ENCODE measurements at regions of chr4 and their contacts with region 1.

Region 1: DNA sequence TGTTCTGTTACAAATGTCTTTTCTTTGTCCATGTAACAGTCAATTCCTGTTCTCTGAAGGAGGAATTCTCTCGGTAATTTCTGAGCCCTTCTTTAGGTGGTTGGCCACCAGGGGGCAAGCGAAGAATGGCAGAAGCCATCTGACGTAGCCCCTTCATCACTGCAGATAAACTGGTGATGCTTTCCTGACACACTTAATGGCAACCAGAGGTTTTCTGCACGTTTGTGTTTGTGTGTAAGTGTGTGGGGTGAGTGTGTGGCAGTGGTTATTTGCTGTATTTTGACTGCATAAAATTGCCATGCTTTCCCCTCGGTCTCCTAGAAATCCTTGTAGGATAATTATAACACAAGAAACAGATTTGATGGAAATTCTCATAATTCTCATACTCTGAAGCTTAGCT is 64.8 kb upstream of the STOX2 start:
- DNase-seq: peak; percentile 39
- ATAC-seq: peak; percentile 81
- H3K4me3 ChIP-seq: no peak overlapping the region
- H3K27ac ChIP-seq: no peak overlapping the region
- H3K4me1 ChIP-seq: no peaks in the 10 kb centered on the region; the same call in 1 of the 2 replicates
- H3K27me3 ChIP-seq: no peaks in the 10 kb centered on the region
- CTCF ChIP-seq: peak; percentile 81

Region 2: DNA sequence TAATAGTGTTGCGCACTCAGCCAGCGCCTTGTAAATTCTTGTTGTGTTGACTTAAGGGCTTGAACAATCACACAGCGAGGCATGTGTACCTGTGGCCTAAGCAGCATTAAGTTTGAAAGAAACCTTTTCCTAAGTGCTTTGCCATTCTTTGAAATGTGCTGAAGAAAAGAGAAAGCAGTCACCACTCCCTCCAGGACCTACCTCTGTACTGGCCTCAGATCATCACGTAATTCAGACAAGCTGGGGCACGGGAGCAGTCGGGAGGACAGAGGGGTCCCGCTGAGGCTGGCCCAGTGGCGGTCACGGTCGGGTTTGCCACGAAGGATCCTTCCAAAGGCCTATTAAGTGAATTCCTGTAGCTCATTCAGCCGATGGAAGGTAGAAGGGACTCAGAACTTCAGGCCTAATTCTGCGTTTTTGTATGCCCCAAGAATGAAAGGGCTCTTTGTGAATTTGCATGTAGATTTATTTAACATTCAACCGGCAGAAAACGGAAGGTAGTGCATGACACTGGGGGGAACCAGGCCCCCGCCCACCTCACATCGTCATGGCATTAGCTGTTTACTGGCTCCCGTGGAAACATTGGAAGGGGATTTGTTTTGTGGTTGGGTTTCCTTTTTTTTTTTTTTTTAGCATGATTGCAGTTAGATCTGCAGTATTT is 74.9 kb before region 1 on chr4:
- CTCF ChIA-PET with region 1: no interaction called
- POLR2A ChIA-PET with region 1: no interaction called
- in situ Hi-C with region 1: no loop called
- intact Hi-C with region 1: no loop called
- DNase-seq: no peak
- ATAC-seq: no peak
- H3K4me3 ChIP-seq: no peak overlapping the region
- H3K27ac ChIP-seq: no peak overlapping the region
- H3K4me1 ChIP-seq: peaks cover 4% of the 10 kb centered on the region
- H3K27me3 ChIP-seq: no peaks in the 10 kb centered on the region
- CTCF ChIP-seq: no peak

Region 3: DNA sequence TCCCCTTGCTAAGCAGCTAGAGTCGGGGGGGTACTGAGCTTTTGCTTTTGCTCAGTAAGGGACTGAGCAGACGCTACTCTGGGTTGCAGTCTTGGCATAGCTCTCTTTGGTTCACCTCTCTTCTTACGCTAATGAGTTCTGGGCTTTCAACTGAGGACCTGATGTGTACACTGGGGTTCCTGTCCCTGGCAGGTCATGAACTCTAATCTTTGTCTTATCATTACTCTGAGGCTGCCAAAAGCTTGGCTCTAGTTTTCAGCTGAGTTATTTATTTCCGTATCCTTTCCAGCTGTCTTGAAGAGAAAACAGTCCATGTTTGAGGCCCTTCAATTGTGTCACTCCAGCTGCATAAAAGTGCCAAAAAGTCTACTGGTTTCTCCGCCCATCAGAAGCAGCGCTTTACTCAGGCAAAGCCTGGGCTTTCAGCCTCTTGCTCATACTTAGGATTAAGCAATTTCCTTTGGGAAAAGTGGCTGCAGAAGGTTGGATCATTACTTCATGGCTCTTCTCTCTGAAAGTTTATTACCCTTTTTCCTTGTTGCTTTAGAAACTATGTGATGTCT is 56.2 kb before region 1 on chr4:
- CTCF ChIA-PET with region 1: no interaction called
- POLR2A ChIA-PET with region 1: no interaction called
- in situ Hi-C with region 1: no loop called
- intact Hi-C with region 1: no loop called
- DNase-seq: no peak
- ATAC-seq: no peak
- H3K4me3 ChIP-seq: no peak overlapping the region
- H3K27ac ChIP-seq: no peak overlapping the region
- H3K4me1 ChIP-seq: no peaks in the 10 kb centered on the region
- H3K27me3 ChIP-seq: no peaks in the 10 kb centered on the region
- CTCF ChIP-seq: no peak

Region 4: GRCh38 chr4:183823434-183823833 is 16.9 kb before region 1 on chr4:
- CTCF ChIA-PET with region 1: no interaction called
- POLR2A ChIA-PET with region 1: no interaction called
- in situ Hi-C with region 1: no loop called
- intact Hi-C with region 1: no loop called
- DNase-seq: no peak
- ATAC-seq: peak; percentile 85
- H3K4me3 ChIP-seq: no peak overlapping the region
- H3K27ac ChIP-seq: 0 out of 2 replicates have a peak overlapping the region, but pooled peaks have one; percentile 12
- H3K4me1 ChIP-seq: no peaks in the 10 kb centered on the region
- H3K27me3 ChIP-seq: no peaks in the 10 kb centered on the region
- CTCF ChIP-seq: no peak

Region 5: GRCh38 chr4:184100297-184100885 is 260.1 kb after region 1 on chr4:
- CTCF ChIA-PET with region 1: no interaction called
- POLR2A ChIA-PET with region 1: no interaction called
- in situ Hi-C with region 1: no loop called
- intact Hi-C with region 1: loop called (anchors 1 kb)
- DNase-seq: no peak
- ATAC-seq: peak; percentile 94
- H3K4me3 ChIP-seq: no peak overlapping the region
- H3K27ac ChIP-seq: no peak overlapping the region
- H3K4me1 ChIP-seq: no peaks in the 10 kb centered on the region
- H3K27me3 ChIP-seq: no peaks in the 10 kb centered on the region
- CTCF ChIP-seq: peak; percentile 90

Region 6: DNA sequence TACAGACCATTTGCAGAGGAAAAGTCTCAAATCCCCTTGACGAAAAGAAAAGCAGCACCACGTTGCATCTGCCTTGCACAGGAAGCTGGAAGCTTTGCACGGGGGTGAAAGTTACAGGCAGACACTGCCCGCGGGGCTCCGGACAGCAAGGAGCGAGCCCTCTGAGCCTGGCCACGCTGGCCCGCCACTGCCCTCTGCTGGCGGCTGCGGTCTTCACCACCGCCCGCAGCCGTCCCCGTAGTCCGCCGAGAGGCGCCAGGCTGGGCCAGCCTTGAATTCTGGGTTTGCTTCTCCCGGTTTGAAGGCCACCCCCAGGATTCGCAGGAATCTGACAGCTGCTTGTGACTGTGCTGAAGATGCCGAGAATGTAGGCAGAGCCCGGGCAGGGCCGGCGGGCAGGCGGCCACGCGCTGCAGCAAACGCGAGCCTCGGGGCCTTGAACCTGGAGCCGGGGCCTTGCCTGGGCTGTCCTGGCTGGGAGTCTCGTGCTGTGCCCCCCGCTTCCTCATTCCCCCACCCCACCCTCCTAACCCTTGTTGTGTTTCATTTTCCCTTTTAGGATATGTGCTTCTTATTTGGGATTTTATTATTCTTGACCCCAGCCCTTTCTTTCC is 328.2 kb after region 1 on chr4:
- CTCF ChIA-PET with region 1: interaction called, 7 read pairs
- POLR2A ChIA-PET with region 1: no interaction called
- in situ Hi-C with region 1: no loop called
- intact Hi-C with region 1: loop called (anchors 1 kb)
- DNase-seq: peak; percentile 12
- ATAC-seq: peak; percentile 98
- H3K4me3 ChIP-seq: no peak overlapping the region
- H3K27ac ChIP-seq: no peak overlapping the region
- H3K4me1 ChIP-seq: no peaks in the 10 kb centered on the region
- H3K27me3 ChIP-seq: no peaks in the 10 kb centered on the region
- CTCF ChIP-seq: peak; percentile 94

Region 7: GRCh38 chr4:184437565-184438265 is 597.4 kb after region 1 on chr4:
- CTCF ChIA-PET with region 1: no interaction called
- POLR2A ChIA-PET with region 1: no interaction called
- in situ Hi-C with region 1: no loop called
- intact Hi-C with region 1: no loop called
- DNase-seq: no peak
- ATAC-seq: no peak
- H3K4me3 ChIP-seq: no peak overlapping the region
- H3K27ac ChIP-seq: no peak overlapping the region
- H3K4me1 ChIP-seq: peaks cover 6% of the 10 kb centered on the region
- H3K27me3 ChIP-seq: no peaks in the 10 kb centered on the region
- CTCF ChIP-seq: no peak

Measured in Panc1 (cell line).